ENCODE measurements at regions of chr12 and their contacts with region 1.

Region 1: GRCh38 chr12:67355578-67356379 is 86.6 kb downstream of the CAND1 start:
- DNase-seq: peak in 1 of 2 experiments; percentile 35
- H3K4me3 ChIP-seq: no peak overlapping the region
- H3K4me3 Mint-ChIP-seq: no peak overlapping the region
- H3K27ac Mint-ChIP-seq: no peak overlapping the region
- H3K4me1 ChIP-seq: peaks cover 3% of the 10 kb centered on the region; the same call in 1 of the 2 replicates
- H3K4me1 Mint-ChIP-seq: peaks cover 5% of the 10 kb centered on the region
- H3K27me3 ChIP-seq: no peaks in the 10 kb centered on the region
- H3K27me3 Mint-ChIP-seq: no peaks in the 10 kb centered on the region
- CTCF ChIP-seq: peak; percentile 55 to 60

Region 2: DNA sequence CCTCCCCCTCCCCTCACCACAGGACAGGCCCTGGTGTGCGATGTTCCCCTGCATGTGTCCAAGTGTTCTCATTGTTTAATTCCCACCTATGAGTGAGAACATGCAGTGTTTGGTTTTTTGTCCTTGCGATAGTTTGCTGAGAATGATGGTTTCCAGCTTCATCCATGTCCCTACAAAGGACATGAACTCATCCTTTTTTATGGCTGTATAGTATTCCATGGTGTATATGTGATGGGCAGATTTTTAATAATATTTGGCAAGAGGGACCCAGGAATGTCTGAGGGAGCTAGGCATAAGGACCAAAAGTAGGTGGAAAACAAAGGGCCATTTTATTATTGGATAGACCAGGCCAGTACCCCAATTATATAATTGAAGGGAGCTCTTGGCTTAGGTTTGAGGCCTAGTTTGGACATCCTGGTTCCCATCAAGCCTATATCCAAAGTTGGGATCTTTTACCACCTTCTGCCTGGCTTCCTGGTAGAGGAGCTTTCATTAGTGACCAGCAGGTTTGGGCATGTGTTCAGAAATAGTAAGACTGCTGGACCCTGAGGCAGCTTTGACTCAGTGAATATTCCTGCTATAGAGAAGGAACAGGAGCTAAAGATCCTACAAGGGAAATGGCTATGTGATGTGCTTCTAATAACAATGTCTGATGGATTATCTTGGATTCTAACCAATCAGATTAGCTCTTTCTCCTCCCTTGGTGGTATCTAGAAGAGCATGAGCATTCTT is 10.6 kb before region 1 on chr12:
- CTCF ChIA-PET with region 1: interaction called, 10 read pairs
- POLR2A ChIA-PET with region 1: no interaction called
- intact Hi-C with region 1: no loop called
- DNase-seq: no peak
- H3K4me3 ChIP-seq: no peak overlapping the region
- H3K4me3 Mint-ChIP-seq: no peak overlapping the region
- H3K27ac Mint-ChIP-seq: no peak overlapping the region
- H3K4me1 ChIP-seq: no peaks in the 10 kb centered on the region
- H3K4me1 Mint-ChIP-seq: peaks cover 6% of the 10 kb centered on the region
- H3K27me3 ChIP-seq: no peaks in the 10 kb centered on the region
- H3K27me3 Mint-ChIP-seq: no peaks in the 10 kb centered on the region
- CTCF ChIP-seq: no peak

Region 3: DNA sequence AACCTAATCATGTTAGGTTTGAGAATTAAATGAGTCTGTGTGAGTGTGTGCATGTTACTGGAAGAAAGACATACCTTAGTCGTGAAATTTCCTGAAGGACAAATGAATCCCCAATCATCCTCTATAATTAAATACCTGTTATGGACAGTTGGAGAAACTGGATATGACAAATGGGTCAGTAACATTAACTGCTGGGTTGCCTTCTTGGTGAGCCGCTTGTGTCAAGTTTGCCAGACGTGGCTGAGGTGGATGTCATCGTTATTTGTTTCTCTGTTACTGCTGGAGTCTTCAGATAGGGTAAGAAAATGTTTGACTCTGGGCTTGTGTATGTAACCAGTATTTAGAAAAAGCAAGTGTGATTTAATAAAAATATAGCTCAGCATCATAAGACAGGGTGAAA is 45.0 kb after region 1 on chr12:
- CTCF ChIA-PET with region 1: no interaction called
- POLR2A ChIA-PET with region 1: no interaction called
- intact Hi-C with region 1: no loop called
- DNase-seq: no peak
- H3K4me3 ChIP-seq: no peak overlapping the region
- H3K4me3 Mint-ChIP-seq: no peak overlapping the region
- H3K27ac Mint-ChIP-seq: no peak overlapping the region
- H3K4me1 ChIP-seq: no peaks in the 10 kb centered on the region
- H3K4me1 Mint-ChIP-seq: no peaks in the 10 kb centered on the region
- H3K27me3 ChIP-seq: no peaks in the 10 kb centered on the region
- H3K27me3 Mint-ChIP-seq: peaks cover 3% of the 10 kb centered on the region
- CTCF ChIP-seq: no peak

Region 4: DNA sequence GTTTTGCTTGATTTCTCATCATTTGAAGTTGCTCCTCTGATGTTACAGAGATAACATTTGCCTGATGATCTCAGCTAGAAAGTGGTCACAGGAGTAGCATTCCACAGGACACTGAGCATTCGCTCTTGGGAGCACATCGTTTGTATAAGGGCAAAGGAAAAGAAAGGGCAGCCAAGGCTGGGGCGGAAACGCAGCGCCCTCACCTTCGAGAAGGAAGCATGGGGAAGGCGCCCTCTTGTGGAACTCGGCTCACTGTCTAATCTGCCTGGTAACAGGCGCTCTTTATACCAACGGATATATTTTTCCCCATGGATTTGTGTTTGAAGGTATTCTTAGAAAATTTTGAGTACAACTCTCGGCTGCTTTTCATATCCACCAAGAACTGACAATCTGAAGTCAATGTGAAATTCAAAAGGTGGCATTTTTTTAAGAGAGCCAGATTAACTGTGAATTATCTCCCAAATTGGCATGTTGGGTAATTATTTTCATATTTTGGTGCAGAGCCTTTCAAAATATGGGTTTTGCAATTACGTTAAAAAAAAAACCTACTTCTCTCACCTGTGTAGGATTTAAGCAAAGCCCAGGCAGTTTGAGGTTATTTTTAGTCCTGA is 86.1 kb after region 1 on chr12:
- CTCF ChIA-PET with region 1: interaction called, 7 read pairs
- POLR2A ChIA-PET with region 1: no interaction called
- intact Hi-C with region 1: loop called (anchors 1 kb)
- DNase-seq: peak; percentile 74 to 77
- H3K4me3 ChIP-seq: no peak overlapping the region
- H3K4me3 Mint-ChIP-seq: no peak overlapping the region
- H3K27ac Mint-ChIP-seq: no peak overlapping the region
- H3K4me1 ChIP-seq: no peaks in the 10 kb centered on the region
- H3K4me1 Mint-ChIP-seq: no peaks in the 10 kb centered on the region
- H3K27me3 ChIP-seq: no peaks in the 10 kb centered on the region
- H3K27me3 Mint-ChIP-seq: no peaks in the 10 kb centered on the region
- CTCF ChIP-seq: peak; percentile 62 to 80

Region 5: GRCh38 chr12:67943226-67943892 is 587.6 kb after region 1 on chr12:
- CTCF ChIA-PET with region 1: interaction called, 25 read pairs
- POLR2A ChIA-PET with region 1: no interaction called
- intact Hi-C with region 1: loop called (anchors 1 kb)
- DNase-seq: peak; percentile 58 to 59
- H3K4me3 ChIP-seq: no peak overlapping the region
- H3K4me3 Mint-ChIP-seq: no peak overlapping the region
- H3K27ac Mint-ChIP-seq: no peak overlapping the region
- H3K4me1 ChIP-seq: peaks cover 15% of the 10 kb centered on the region
- H3K4me1 Mint-ChIP-seq: peaks cover 9% of the 10 kb centered on the region
- H3K27me3 ChIP-seq: no peaks in the 10 kb centered on the region; the same call in 1 of the 2 replicates
- H3K27me3 Mint-ChIP-seq: peaks cover 9% of the 10 kb centered on the region
- CTCF ChIP-seq: peak; percentile 48 to 58

Region 6: GRCh38 chr12:69272511-69272910 is 1916.7 kb after region 1 on chr12:
- CTCF ChIA-PET with region 1: interaction called, 11 read pairs
- POLR2A ChIA-PET with region 1: no interaction called
- intact Hi-C with region 1: no loop called
- DNase-seq: no peak
- H3K4me3 ChIP-seq: no peak overlapping the region
- H3K4me3 Mint-ChIP-seq: no peak overlapping the region
- H3K27ac Mint-ChIP-seq: no peak overlapping the region
- H3K4me1 ChIP-seq: peaks cover 14% of the 10 kb centered on the region
- H3K4me1 Mint-ChIP-seq: peaks cover 8% of the 10 kb centered on the region
- H3K27me3 ChIP-seq: no peaks in the 10 kb centered on the region
- H3K27me3 Mint-ChIP-seq: no peaks in the 10 kb centered on the region
- CTCF ChIP-seq: no peak

Measured in Caco-2 (cell line).